Ascending aorta (tissue), 2 donors: ENCODE measurements at regions of chr4 and their contacts with region 1.

Region 1: DNA sequence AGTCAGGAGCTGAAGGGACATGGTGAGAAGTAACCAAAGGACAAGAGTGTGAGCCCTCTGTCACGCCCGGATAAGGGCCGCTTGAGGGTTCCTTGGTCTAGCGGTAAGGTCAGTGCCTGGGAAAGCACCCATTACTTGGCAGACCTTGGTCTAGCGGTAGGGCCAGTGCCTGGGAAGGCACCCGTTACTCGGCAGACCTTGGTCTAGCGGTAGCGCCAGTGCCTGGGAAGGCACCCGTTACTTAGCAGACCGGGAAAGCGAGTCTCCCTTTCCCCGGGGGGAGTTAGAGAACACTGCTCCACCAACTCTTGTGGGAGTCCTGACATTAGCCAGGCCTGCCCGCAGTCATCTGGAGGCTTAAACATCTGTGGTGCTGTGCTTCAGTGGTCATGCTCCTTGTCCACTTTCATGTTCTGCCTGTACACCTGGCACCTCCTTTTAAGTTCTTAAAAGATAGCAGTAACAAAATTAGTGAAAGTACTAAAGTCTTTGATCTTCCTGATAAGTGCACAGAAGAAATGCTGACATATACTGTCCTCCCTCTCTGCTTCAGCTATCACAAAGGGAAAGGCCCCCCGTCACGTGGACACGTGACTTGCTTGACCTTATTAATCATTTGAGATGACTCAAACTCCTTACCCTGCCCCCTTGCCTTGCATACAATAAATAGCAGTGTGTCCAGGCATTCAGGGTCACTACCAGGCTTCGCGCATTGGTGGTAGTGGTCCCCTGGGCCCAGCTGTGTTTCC is 9.3 kb upstream of the SEC24B start:
- DNase-seq: no peak
- H3K4me3 ChIP-seq: no peak overlapping the region
- H3K27ac ChIP-seq: no peak overlapping the region
- H3K4me1 ChIP-seq: no peaks in the 10 kb centered on the region
- H3K27me3 ChIP-seq: no peaks in the 10 kb centered on the region
- CTCF ChIP-seq: no peak

Region 2: DNA sequence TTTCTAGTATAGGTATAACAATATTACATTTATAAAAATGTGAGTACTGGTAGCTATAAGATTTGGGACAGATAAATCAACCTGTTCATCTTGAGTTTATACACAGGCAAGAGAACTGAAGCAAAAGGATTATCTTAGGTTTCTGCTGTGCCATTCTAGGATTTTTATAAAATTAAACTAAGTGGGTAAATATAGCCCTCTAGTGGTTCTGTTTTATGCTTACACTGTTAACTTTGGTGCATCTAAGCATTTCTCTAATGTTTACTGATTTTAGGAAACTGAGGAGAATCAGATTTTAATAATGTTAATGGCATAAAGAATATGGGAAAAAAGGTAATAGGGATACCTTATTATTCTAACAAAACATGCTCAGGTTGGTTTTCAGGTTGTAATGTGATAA is 402.5 kb after region 1 on chr4:
- intact Hi-C with region 1: loop called (anchors 5 kb)
- DNase-seq: no peak
- H3K4me3 ChIP-seq: no peak overlapping the region
- H3K27ac ChIP-seq: no peak overlapping the region
- H3K4me1 ChIP-seq: no peaks in the 10 kb centered on the region
- H3K27me3 ChIP-seq: no peaks in the 10 kb centered on the region
- CTCF ChIP-seq: peak; percentile 24 to 47 (median 27)

Region 3: GRCh38 chr4:109977854-109978501 is 553.7 kb after region 1 on chr4:
- intact Hi-C with region 1: loop called (anchors 2 kb)
- DNase-seq: no peak
- H3K4me3 ChIP-seq: no peak overlapping the region
- H3K27ac ChIP-seq: no peak overlapping the region
- H3K4me1 ChIP-seq: no peaks in the 10 kb centered on the region
- H3K27me3 ChIP-seq: no peaks in the 10 kb centered on the region
- CTCF ChIP-seq: peak in 2 of 3 experiments; percentile 35 to 50